CD14-positive monocyte (primary cell): ENCODE measurements at regions of chr9 and their contacts with region 1.

Region 1: GRCh38 chr9:99244344-99245260 is 22.5 kb downstream of the SEC61B start:
- DNase-seq: peak in 1 of 3 donors; percentile 14
- H3K4me3 ChIP-seq: no peak overlapping the region
- H3K4me3 Mint-ChIP-seq: peak overlapping the region in 1 of 2 donors; percentile 54
- H3K27ac ChIP-seq: peak overlapping the region in 1 of 2 donors; percentile 0
- H3K27ac Mint-ChIP-seq: peak overlapping the region in 6 of 7 donors; percentile 68 to 91 (median 79)
- H3K4me1 ChIP-seq: peaks cover 12 to 16% of the 10 kb centered on the region in 2 donors
- H3K4me1 Mint-ChIP-seq: peaks cover 18% of the 10 kb centered on the region
- H3K27me3 ChIP-seq: no peaks in the 10 kb centered on the region
- H3K27me3 Mint-ChIP-seq: peaks cover 0 to 1% (median 0%) of the 10 kb centered on the region in 3 donors
- CTCF ChIP-seq: no peak

Region 2: GRCh38 chr9:98922721-98923435 is 321.7 kb before region 1 on chr9:
- intact Hi-C with region 1: no loop called
- DNase-seq: peak; percentile 18 to 35 (median 21)
- H3K4me3 ChIP-seq: no peak overlapping the region
- H3K4me3 Mint-ChIP-seq: no peak overlapping the region
- H3K27ac ChIP-seq: no peak overlapping the region
- H3K27ac Mint-ChIP-seq: peak overlapping the region in 3 of 7 donors; percentile 46 to 63 (median 47)
- H3K4me1 ChIP-seq: peaks cover 8% of the 10 kb centered on the region in 2 donors
- H3K4me1 Mint-ChIP-seq: peaks cover 13% of the 10 kb centered on the region
- H3K27me3 ChIP-seq: no peaks in the 10 kb centered on the region
- H3K27me3 Mint-ChIP-seq: peaks cover 0 to 1% (median 0%) of the 10 kb centered on the region in 3 donors
- CTCF ChIP-seq: no peak

Region 3: GRCh38 chr9:99192786-99193465 is 51.7 kb before region 1 on chr9:
- intact Hi-C with region 1: loop called in 1 of 2 experiments (anchors 10 kb)
- DNase-seq: no peak
- H3K4me3 ChIP-seq: no peak overlapping the region
- H3K4me3 Mint-ChIP-seq: no peak overlapping the region
- H3K27ac ChIP-seq: no peak overlapping the region
- H3K27ac Mint-ChIP-seq: no peak overlapping the region
- H3K4me1 ChIP-seq: peaks cover 0 to 1% of the 10 kb centered on the region in 2 donors
- H3K4me1 Mint-ChIP-seq: peaks cover under 1% of the 10 kb centered on the region
- H3K27me3 ChIP-seq: no peaks in the 10 kb centered on the region
- H3K27me3 Mint-ChIP-seq: peaks cover 0 to 11% (median 8%) of the 10 kb centered on the region in 3 donors
- CTCF ChIP-seq: no peak

Region 4: GRCh38 chr9:99211741-99212140 is 32.9 kb before region 1 on chr9:
- intact Hi-C with region 1: no loop called
- DNase-seq: no peak
- H3K4me3 ChIP-seq: no peak overlapping the region
- H3K4me3 Mint-ChIP-seq: no peak overlapping the region
- H3K27ac ChIP-seq: no peak overlapping the region
- H3K27ac Mint-ChIP-seq: peak overlapping the region in 1 of 7 donors; percentile 59
- H3K4me1 ChIP-seq: peaks cover 10 to 17% of the 10 kb centered on the region in 2 donors
- H3K4me1 Mint-ChIP-seq: peaks cover 30% of the 10 kb centered on the region
- H3K27me3 ChIP-seq: no peaks in the 10 kb centered on the region
- H3K27me3 Mint-ChIP-seq: peaks cover 0 to 4% (median 1%) of the 10 kb centered on the region in 3 donors
- CTCF ChIP-seq: no peak